ENCODE measurements at regions of chr12 and their contacts with region 1.

Region 1: GRCh38 chr12:34218165-34219045 is 196.1 kb downstream of the ALG10 start:
- DNase-seq: peak; percentile 1
- ATAC-seq: peak; percentile 85
- H3K4me3 ChIP-seq: peak overlapping the region; percentile 36; the same call in 1 of the 2 replicates
- H3K27ac ChIP-seq: no peak overlapping the region
- H3K4me1 ChIP-seq: no peaks in the 10 kb centered on the region
- H3K27me3 ChIP-seq: no peaks in the 10 kb centered on the region
- CTCF ChIP-seq: peak; percentile 74 to 79 (median 78)
- EP300 ChIP-seq: no peak
- POLR2A ChIP-seq: no peak
- RAD21 ChIP-seq: peak; percentile 70

Region 2: GRCh38 chr12:34033628-34034282 is 184.7 kb before region 1 on chr12:
- CTCF ChIA-PET with region 1: no interaction called
- POLR2A ChIA-PET with region 1: no interaction called
- RAD21 ChIA-PET with region 1: no interaction called
- SMC1A ChIA-PET with region 1: no interaction called
- in situ Hi-C with region 1: loop called (anchors 5 kb)
- intact Hi-C with region 1: loop called (anchors 1 kb)
- DNase-seq: no peak
- ATAC-seq: peak; percentile 45; the same call in 2 of the 3 replicates
- H3K4me3 ChIP-seq: no peak overlapping the region
- H3K27ac ChIP-seq: no peak overlapping the region
- H3K4me1 ChIP-seq: no peaks in the 10 kb centered on the region
- H3K27me3 ChIP-seq: no peaks in the 10 kb centered on the region
- CTCF ChIP-seq: peak in 2 of 3 experiments; percentile 32 to 34; a peak in 4 of 6 replicates
- EP300 ChIP-seq: no peak
- POLR2A ChIP-seq: no peak
- RAD21 ChIP-seq: peak; percentile 36; the same call in 1 of the 2 replicates

Region 3: GRCh38 chr12:34126239-34126641 is 92.2 kb before region 1 on chr12:
- CTCF ChIA-PET with region 1: interaction called, 13 read pairs
- POLR2A ChIA-PET with region 1: no interaction called
- RAD21 ChIA-PET with region 1: interaction called, 3 read pairs
- SMC1A ChIA-PET with region 1: interaction called, 5 read pairs
- in situ Hi-C with region 1: loop called (anchors 5 kb)
- intact Hi-C with region 1: loop called (anchors 1 kb)
- DNase-seq: no peak
- ATAC-seq: peak; percentile 69
- H3K4me3 ChIP-seq: no peak overlapping the region; the same call in 1 of the 2 replicates
- H3K27ac ChIP-seq: no peak overlapping the region
- H3K4me1 ChIP-seq: no peaks in the 10 kb centered on the region
- H3K27me3 ChIP-seq: no peaks in the 10 kb centered on the region
- CTCF ChIP-seq: no peak
- EP300 ChIP-seq: no peak
- POLR2A ChIP-seq: no peak
- RAD21 ChIP-seq: no peak